ENCODE measurements at regions of chr11 and their contacts with region 1.

Region 1: DNA sequence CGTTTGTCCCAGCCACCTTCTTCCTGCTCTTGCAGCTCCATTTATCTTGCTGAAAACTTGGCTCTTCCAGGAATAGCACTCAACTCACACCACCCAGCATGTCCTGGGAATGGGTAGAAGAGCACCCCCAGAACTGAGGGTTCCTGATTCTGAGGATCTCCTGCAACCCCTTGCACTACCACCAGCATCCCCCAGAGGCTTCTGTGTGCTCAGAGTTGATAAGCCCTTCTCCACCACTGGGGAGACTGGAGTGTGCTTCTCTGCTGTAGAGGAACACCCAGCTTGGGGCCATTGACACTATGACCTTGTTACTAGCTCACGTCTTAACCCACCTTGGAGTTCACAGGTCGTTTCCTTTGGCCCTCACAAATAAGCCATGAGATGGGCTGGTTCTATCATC is 121.0 kb downstream of the GRIK4 start:
- DNase-seq: no peak
- ATAC-seq: peak; percentile 87
- H3K4me3 ChIP-seq: no peak overlapping the region
- H3K27ac ChIP-seq: no peak overlapping the region
- H3K4me1 ChIP-seq: peaks cover 10% of the 10 kb centered on the region
- H3K27me3 ChIP-seq: no peaks in the 10 kb centered on the region
- CTCF ChIP-seq: peak; percentile 16 to 64 (median 62)
- EP300 ChIP-seq: no peak
- POLR2A ChIP-seq: no peak
- RAD21 ChIP-seq: peak; percentile 60

Region 2: GRCh38 chr11:119641983-119642745 is 990.4 kb before region 1 on chr11:
- CTCF ChIA-PET with region 1: no interaction called
- POLR2A ChIA-PET with region 1: no interaction called
- RAD21 ChIA-PET with region 1: no interaction called
- SMC1A ChIA-PET with region 1: no interaction called
- in situ Hi-C with region 1: no loop called
- intact Hi-C with region 1: no loop called
- DNase-seq: no peak
- ATAC-seq: peak; percentile 83
- H3K4me3 ChIP-seq: no peak overlapping the region
- H3K27ac ChIP-seq: no peak overlapping the region
- H3K4me1 ChIP-seq: no peaks in the 10 kb centered on the region
- H3K27me3 ChIP-seq: peaks cover 3% of the 10 kb centered on the region in 2 experiments; a peak in 3 of 4 replicates
- CTCF ChIP-seq: peak; percentile 63 to 75 (median 67)
- EP300 ChIP-seq: no peak
- POLR2A ChIP-seq: no peak
- RAD21 ChIP-seq: peak; percentile 49

Region 3: DNA sequence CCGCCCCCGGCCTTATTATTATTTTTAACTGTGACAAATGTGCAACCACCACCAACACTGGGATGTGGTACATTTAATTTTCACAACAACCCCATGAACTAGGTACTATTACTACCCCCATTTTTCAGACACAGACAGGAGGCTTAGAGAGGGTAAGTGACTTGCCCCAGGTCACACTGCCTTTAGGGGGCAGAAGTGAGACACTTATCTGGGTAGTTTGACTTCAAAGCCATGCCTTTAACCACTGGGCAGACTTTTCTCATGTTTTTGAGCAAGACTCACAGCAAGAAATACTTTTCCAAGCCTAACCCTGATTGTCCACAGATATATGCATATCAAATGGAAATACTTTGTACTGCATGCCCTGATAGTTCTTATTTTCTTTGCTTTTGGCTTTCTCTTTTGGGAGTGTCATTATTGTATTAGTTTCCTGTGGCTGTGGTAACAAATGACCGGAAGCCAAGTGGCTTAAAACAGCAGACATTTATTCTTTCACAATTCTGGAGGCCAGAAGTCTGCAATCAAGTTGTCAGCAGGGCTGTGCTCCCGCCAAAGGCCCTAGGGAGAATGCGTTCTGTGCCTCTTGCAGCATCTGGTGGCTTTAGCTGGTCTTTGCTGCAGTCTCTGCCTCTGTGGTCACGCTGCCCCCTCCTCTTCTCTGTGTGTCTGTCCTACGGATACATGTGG is 10.2 kb before region 1 on chr11:
- CTCF ChIA-PET with region 1: interaction called, 12 read pairs
- POLR2A ChIA-PET with region 1: no interaction called
- RAD21 ChIA-PET with region 1: interaction called, 3 read pairs
- SMC1A ChIA-PET with region 1: interaction called, 6 read pairs
- in situ Hi-C with region 1: no loop called
- intact Hi-C with region 1: no loop called
- DNase-seq: no peak
- ATAC-seq: peak; percentile 89
- H3K4me3 ChIP-seq: no peak overlapping the region
- H3K27ac ChIP-seq: no peak overlapping the region; the same call in 1 of the 2 replicates
- H3K4me1 ChIP-seq: peaks cover 6% of the 10 kb centered on the region; the same call in 1 of the 2 replicates
- H3K27me3 ChIP-seq: no peaks in the 10 kb centered on the region
- CTCF ChIP-seq: peak; percentile 35 to 56 (median 54)
- EP300 ChIP-seq: no peak
- POLR2A ChIP-seq: no peak
- RAD21 ChIP-seq: peak; percentile 36

Region 4: DNA sequence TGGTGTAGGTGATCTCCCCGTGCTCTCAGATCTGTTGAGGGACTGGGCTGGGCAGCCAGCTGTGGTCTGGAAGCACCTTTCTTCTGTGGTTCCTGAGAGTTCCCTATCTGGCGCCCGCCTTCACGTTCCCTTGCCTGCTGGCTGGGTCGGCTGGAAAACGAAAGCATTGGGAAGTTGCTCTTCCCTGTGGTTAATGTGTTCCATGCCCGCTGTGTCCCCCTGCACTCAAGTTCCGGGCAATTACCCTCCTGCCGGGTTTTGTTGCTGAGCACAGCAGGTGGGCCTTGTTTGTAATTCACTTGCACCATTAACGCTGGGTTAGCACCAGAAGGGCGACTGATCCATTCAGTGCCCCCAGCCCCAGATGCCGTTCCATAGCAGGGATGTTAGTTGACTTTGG is 13.1 kb after region 1 on chr11:
- CTCF ChIA-PET with region 1: interaction called, 4 read pairs
- POLR2A ChIA-PET with region 1: interaction called, 3 read pairs
- RAD21 ChIA-PET with region 1: interaction called, 3 read pairs
- SMC1A ChIA-PET with region 1: interaction called, 11 read pairs
- in situ Hi-C with region 1: no loop called
- intact Hi-C with region 1: no loop called
- DNase-seq: no peak
- ATAC-seq: no peak
- H3K4me3 ChIP-seq: no peak overlapping the region
- H3K27ac ChIP-seq: no peak overlapping the region
- H3K4me1 ChIP-seq: no peaks in the 10 kb centered on the region
- H3K27me3 ChIP-seq: no peaks in the 10 kb centered on the region; a peak in 1 of 4 replicates
- CTCF ChIP-seq: no peak
- EP300 ChIP-seq: no peak
- POLR2A ChIP-seq: no peak
- RAD21 ChIP-seq: no peak

Measured in GM12878 (cell line).